ENCODE measurements at regions of chr9 and their contacts with region 1.

Region 1: GRCh38 chr9:35732122-35732799 is at the starts of genes CREB3 and TLN1:
- H3K4me3 ChIP-seq: peak within 1 kb of the TSS; percentile 81
- H3K27ac ChIP-seq: peak within 1 kb of the TSS; percentile 81
- H3K4me1 ChIP-seq: peaks cover 13% of the 10 kb centered on the region
- CTCF ChIP-seq: peak; percentile 81

Region 2: DNA sequence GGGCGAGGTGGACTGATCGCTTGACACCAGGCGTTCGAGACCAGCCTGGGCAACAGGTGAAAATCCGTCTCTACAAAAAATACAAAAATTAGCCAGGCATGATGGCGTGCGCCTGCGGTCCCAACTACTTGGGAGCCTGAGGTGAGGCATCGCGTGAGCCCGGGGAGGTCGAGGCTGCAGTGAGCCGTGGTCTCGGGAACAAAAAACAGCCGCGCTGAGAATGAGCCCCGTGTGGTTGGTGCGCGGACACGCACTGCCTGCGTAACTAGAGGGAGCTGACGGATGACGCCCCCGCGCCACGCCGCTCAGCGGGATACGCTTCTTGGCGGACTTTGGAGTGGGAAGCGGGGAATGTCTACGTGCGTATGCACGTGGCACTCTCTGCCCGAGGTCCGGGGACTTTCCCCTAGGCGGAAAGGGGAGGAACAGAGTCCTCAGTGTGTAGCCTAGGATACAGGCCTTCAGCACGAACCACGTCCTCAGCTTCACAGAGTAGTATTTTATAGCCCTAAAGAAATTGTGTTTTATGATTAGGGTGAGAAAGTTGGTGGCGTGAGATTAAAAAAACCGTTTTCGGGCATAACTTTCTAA is 74.6 kb before region 1 on chr9 and contains the start of gene RMRP:
- CTCF ChIA-PET with region 1: interaction called, 22 read pairs
- POLR2A ChIA-PET with region 1: interaction called, 36 read pairs
- H3K4me3 ChIP-seq: peak within 1 kb of the TSS; percentile 70
- H3K27ac ChIP-seq: peak within 1 kb of the TSS; percentile 93
- H3K4me1 ChIP-seq: peaks cover 8% of the 10 kb centered on the region; the same call in 1 of the 2 replicates
- CTCF ChIP-seq: peak; percentile 89

Region 3: GRCh38 chr9:35690431-35691333 is 41.6 kb before region 1 on chr9:
- CTCF ChIA-PET with region 1: interaction called, 88 read pairs
- POLR2A ChIA-PET with region 1: interaction called, 20 read pairs
- H3K4me3 ChIP-seq: peak overlapping the region; percentile 58
- H3K27ac ChIP-seq: peak overlapping the region; percentile 56; the same call in 1 of the 2 replicates
- H3K4me1 ChIP-seq: peaks cover 3% of the 10 kb centered on the region; the same call in 1 of the 2 replicates
- CTCF ChIP-seq: no peak

Region 4: DNA sequence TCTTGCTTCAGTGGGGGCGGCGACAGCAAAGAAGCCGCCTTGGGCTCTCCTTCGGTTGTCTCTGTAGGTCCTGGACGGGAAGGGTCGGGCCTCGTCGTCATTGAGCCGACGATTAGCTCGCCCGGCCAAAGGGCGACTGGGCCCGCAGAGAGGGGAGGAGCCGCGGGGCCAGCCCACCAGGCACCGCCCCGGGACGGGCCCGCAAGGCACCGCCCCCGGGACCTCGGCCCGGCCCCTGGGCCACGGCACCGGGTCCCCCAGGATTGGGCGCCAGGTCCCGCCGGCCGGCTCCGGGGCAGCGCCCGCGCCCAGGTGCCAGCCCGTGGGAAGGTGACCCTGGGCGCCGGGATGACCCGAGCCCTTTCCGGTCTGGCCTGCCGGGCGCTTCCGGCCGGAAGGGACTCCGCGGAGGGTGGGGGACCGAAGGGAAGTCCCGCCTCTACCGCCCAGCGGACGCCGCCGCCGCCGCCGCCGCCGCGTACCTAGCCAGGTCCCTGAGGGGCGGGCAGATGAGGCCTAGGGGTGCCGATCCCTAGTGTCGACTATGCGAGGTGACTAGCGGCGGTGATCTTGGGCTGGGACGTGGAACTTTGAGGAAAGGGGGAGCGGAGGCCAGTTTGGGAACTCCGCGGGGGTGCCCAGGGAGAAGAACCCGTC is 16.7 kb after region 1 on chr9 and contains the starts of genes GBA2 and RGP1:
- CTCF ChIA-PET with region 1: interaction called, 51 read pairs
- POLR2A ChIA-PET with region 1: interaction called, 73 read pairs
- H3K4me3 ChIP-seq: peak within 1 kb of the TSS; percentile 77
- H3K27ac ChIP-seq: peak within 1 kb of the TSS; percentile 67
- H3K4me1 ChIP-seq: no peaks in the 10 kb centered on the region; the same call in 1 of the 2 replicates
- CTCF ChIP-seq: no peak